ENCODE measurements at regions of chrX and their contacts with region 1.

Region 1: DNA sequence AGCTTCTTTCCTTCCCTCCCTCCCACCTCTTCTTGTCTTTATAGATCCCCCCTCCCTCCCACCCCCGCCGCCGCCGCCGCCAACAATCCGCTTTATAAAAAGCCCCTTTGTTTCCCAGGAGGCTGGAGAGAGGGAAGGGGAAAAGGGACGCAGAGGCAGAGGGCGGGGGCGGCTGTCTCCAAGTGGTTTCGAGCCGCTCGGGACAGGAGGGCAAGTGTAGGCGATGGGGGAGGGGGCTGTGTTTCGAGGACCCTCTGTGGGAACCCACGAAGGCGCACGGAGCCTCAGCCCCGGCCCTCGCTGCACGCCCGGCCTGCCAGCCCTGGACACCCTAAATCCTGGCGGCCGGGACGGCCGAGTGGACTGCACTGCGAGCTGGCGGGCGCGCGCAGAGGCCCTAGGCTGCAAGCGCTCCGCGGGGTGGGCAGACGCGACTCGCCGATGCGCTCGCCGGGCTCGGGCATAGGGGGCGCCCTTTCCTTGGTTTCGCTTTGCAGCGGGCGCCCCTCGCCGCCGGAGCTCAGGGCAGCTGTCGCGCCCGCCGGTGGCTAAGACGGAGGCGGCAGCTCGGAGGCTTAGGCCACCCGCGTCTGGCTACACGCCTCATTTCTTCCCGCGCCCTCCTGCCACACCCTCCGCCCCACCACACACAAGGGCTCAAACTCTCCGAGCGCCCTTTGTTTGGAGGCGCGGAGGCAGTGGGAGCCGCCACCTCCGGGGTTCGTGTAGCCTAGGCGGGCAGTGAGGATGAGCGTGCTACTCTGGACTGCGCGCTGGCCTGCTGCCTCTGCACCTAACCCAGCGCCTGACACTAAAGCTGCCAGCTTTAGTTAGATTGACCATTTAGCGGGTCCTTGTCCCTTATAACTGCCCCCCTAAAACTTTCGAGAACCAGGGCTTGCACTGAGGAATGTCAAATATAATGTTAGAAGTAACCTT is 2.2 kb downstream of the MAMLD1 start:
- DNase-seq: peak; percentile 62
- H3K4me3 ChIP-seq: peak overlapping the region; percentile 46 to 78 (median 66)
- H3K27ac ChIP-seq: peak overlapping the region; percentile 58
- H3K4me1 ChIP-seq: peaks cover 13% of the 10 kb centered on the region
- H3K27me3 ChIP-seq: peaks cover 15% of the 10 kb centered on the region in 2 experiments
- CTCF ChIP-seq: peak; percentile 53 to 71
- POLR2A ChIP-seq: no peak

Region 2: GRCh38 chrX:149962859-149963757 is 402.2 kb before region 1 on chrX:
- CTCF ChIA-PET with region 1: interaction called, 25 read pairs
- POLR2A ChIA-PET with region 1: no interaction called
- dilution Hi-C with region 1: no loop called
- intact Hi-C with region 1: loop called (anchors 1 kb)
- DNase-seq: peak; percentile 59
- H3K4me3 ChIP-seq: no peak overlapping the region
- H3K27ac ChIP-seq: no peak overlapping the region
- H3K4me1 ChIP-seq: no peaks in the 10 kb centered on the region
- H3K27me3 ChIP-seq: no peaks in the 10 kb centered on the region
- CTCF ChIP-seq: peak; percentile 54 to 60
- POLR2A ChIP-seq: no peak

Region 3: DNA sequence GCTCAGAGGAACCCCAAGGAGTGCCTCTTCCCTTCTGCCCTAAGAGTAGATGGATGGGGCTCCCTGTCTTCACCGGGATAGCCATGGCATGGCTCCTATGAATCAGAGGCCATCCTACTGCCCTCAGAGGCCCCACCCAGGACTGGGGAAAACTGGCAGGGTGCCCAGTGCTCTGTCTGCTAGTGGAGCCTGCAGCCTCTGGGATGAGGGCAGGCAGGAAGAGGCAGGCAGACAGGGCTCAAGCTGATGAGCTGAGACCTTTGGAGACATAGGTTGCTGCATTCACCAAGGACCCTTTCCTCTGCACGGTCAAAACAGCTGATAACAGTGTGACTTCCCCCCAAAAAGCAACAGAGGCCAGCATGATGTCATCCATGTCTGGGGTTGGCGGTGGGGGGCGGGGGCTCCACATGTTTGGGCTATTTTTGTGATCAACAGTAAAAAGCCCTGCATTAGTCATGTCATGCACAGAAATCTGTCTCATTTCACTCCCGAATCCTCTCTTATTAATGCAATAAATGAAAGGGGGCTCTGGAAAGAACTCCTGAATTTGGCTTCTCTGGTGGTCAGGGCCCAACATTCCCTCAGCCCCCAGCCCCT is 209.8 kb before region 1 on chrX:
- CTCF ChIA-PET with region 1: interaction called, 3 read pairs
- POLR2A ChIA-PET with region 1: no interaction called
- dilution Hi-C with region 1: no loop called
- intact Hi-C with region 1: loop called (anchors 10 kb)
- DNase-seq: peak; percentile 15
- H3K4me3 ChIP-seq: no peak overlapping the region
- H3K27ac ChIP-seq: no peak overlapping the region
- H3K4me1 ChIP-seq: no peaks in the 10 kb centered on the region
- H3K27me3 ChIP-seq: no peaks in the 10 kb centered on the region
- CTCF ChIP-seq: no peak
- POLR2A ChIP-seq: no peak

Region 4: DNA sequence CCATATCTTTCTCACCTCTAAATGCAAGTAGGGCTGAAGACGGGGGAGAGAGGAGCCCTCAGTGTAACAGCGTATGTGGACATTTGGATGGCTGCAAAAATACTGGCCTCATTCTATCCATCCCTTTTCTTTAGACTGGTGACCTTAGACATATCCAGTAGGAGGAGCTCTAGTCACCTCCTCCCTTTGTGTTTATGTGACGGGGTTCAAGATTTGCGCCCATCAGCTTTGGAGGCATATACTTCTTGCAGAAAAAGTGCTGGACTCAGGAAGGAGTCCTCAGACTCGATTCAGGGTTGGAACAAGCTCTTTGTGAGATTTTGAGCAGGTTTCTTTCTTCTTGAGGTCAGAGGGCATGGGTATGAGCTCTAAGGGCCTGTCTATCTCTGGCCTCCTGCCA is 84.0 kb after region 1 on chrX:
- CTCF ChIA-PET with region 1: interaction called, 4 read pairs
- POLR2A ChIA-PET with region 1: no interaction called
- dilution Hi-C with region 1: no loop called
- intact Hi-C with region 1: loop called (anchors 5 kb)
- DNase-seq: no peak
- H3K4me3 ChIP-seq: no peak overlapping the region
- H3K27ac ChIP-seq: no peak overlapping the region
- H3K4me1 ChIP-seq: peaks cover 13% of the 10 kb centered on the region
- H3K27me3 ChIP-seq: no peaks in the 10 kb centered on the region
- CTCF ChIP-seq: no peak
- POLR2A ChIP-seq: no peak

Region 5: GRCh38 chrX:150499240-150499639 is 133.9 kb after region 1 on chrX:
- CTCF ChIA-PET with region 1: no interaction called
- POLR2A ChIA-PET with region 1: no interaction called
- dilution Hi-C with region 1: no loop called
- intact Hi-C with region 1: no loop called
- DNase-seq: no peak
- H3K4me3 ChIP-seq: no peak overlapping the region
- H3K27ac ChIP-seq: no peak overlapping the region
- H3K4me1 ChIP-seq: peaks cover 6% of the 10 kb centered on the region
- H3K27me3 ChIP-seq: no peaks in the 10 kb centered on the region
- CTCF ChIP-seq: no peak
- POLR2A ChIP-seq: no peak

Region 6: GRCh38 chrX:150568320-150569154 is 203.2 kb after region 1 on chrX and contains the start of gene MTM1:
- CTCF ChIA-PET with region 1: interaction called, 5 read pairs
- POLR2A ChIA-PET with region 1: no interaction called
- dilution Hi-C with region 1: no loop called
- intact Hi-C with region 1: loop called (anchors 1 kb)
- DNase-seq: peak; percentile 95
- H3K4me3 ChIP-seq: peak within 1 kb of the TSS; percentile 54 to 92 (median 75)
- H3K27ac ChIP-seq: peak within 1 kb of the TSS; percentile 21
- H3K4me1 ChIP-seq: peaks cover 11% of the 10 kb centered on the region
- H3K27me3 ChIP-seq: no peaks in the 10 kb centered on the region
- CTCF ChIP-seq: no peak
- POLR2A ChIP-seq: no peak
- total RNA-seq, gene MTM1: 10.1 and 13.2 TPM in 2 replicates

Region 7: DNA sequence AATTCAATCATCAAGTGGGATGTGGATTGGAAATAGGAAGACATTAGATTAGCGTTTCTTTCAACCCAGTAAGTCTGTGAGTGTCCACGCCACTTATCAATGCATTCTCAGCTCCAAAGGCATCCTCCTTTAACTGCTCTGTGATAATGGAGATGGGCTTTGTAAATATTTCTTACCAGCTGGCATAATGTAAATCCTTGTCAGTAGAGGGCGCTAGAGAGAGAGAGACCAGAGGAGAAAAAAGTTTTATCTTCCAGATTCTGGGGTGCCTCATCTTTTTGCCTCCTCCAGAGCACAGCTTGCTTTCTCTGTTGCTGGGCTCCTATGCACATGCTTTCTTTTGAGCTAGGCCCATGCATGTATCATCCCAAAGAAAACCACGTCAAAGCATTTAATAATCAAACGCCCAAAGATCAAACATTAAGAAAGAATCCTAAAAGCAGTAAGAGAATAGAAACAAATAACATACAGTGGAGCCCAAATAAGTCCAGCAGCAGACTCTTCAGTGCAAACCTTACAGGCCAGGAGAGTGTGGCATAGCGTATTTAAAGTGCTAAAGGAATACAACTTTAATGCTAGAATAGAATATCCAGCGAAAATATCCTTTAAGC is 318.3 kb after region 1 on chrX:
- CTCF ChIA-PET with region 1: interaction called, 3 read pairs
- POLR2A ChIA-PET with region 1: no interaction called
- dilution Hi-C with region 1: no loop called
- intact Hi-C with region 1: loop called (anchors 1 kb)
- DNase-seq: peak; percentile 31
- H3K4me3 ChIP-seq: no peak overlapping the region
- H3K27ac ChIP-seq: no peak overlapping the region
- H3K4me1 ChIP-seq: peaks cover 3% of the 10 kb centered on the region
- H3K27me3 ChIP-seq: no peaks in the 10 kb centered on the region
- CTCF ChIP-seq: peak; percentile 27 to 42
- POLR2A ChIP-seq: no peak